Activated T-helper 2 cell treated with anti-CD3 and anti-CD28 coated beads, Interferon-gamma antibody, Interleukin-2, Interleukin-4, amounts not matched to agents 10 μg/mL and 5 μg/mL and 100 μg/mL, durations not matched to agents 14 hours and 24 hours and 36 hours (primary cell): ENCODE measurements at regions of chr14 and their contacts with region 1.

Region 1: GRCh38 chr14:105682940-105683570 is 156.7 kb downstream of the TMEM121 start:
- DNase-seq: no peak
- H3K4me3 Mint-ChIP-seq: no peak overlapping the region
- H3K27ac Mint-ChIP-seq: no peak overlapping the region
- H3K4me1 Mint-ChIP-seq: no peaks in the 10 kb centered on the region
- H3K27me3 Mint-ChIP-seq: no peaks in the 10 kb centered on the region

Region 2: GRCh38 chr14:105527661-105528581 is 155.1 kb before region 1 on chr14:
- intact Hi-C with region 1: no loop called
- DNase-seq: peak; percentile 75
- H3K4me3 Mint-ChIP-seq: peak overlapping the region; percentile 71
- H3K27ac Mint-ChIP-seq: no peak overlapping the region
- H3K4me1 Mint-ChIP-seq: peaks cover 2% of the 10 kb centered on the region
- H3K27me3 Mint-ChIP-seq: peaks cover 25% of the 10 kb centered on the region

Region 3: GRCh38 chr14:105627711-105628110 is 55.3 kb before region 1 on chr14:
- intact Hi-C with region 1: no loop called
- DNase-seq: no peak
- H3K4me3 Mint-ChIP-seq: no peak overlapping the region
- H3K27ac Mint-ChIP-seq: no peak overlapping the region
- H3K4me1 Mint-ChIP-seq: no peaks in the 10 kb centered on the region
- H3K27me3 Mint-ChIP-seq: peaks cover 1% of the 10 kb centered on the region

Region 4: DNA sequence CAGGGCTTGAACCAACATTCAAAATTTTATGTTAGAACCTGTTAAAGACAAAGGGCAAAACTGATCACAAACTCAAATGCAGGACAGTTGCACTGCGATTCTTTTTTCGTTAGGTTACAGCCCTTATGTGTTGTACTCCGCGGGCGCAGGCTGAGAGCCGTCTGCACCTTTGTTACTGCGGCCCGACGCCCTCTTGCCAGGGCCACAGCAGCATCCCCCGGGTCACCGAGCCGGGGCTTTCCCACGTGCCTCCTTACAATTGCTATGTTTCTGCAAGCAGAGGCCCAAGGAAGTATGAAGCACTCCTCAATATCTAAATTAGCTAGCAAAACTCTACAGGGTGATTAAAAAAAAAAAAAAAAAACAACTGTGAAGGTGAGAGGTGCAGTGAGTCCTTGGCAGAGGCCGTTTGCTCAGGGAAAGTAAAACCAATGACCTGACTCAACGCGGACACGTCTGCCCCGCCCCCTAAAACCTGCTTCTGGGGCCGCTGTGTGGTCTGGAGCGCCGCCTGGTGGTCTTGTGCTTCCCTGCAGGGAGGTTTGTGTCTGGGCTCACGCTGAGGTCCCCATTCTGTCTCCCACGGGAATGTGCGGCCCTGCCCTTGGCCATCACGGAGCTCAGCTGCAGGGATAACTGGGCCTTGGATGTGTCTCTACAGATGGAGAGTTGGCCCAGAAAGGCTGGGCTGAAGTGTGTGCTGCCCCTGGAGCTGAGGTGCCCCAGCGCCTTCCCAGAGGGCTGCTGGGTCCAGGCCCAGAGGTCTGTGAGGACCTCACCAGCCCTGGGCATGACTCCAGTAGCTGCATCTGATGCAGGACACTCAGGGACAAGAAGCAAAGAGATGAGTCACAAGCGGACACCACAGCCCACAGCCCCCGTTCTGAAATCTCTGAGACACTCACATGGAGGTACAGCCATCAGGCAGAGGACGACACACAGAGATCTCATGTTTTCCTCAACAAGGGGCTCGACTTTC is 261.9 kb after region 1 on chr14:
- intact Hi-C with region 1: loop called (anchors 5 kb)
- DNase-seq: peak; percentile 69
- H3K4me3 Mint-ChIP-seq: no peak overlapping the region
- H3K27ac Mint-ChIP-seq: no peak overlapping the region
- H3K4me1 Mint-ChIP-seq: peaks cover 3% of the 10 kb centered on the region
- H3K27me3 Mint-ChIP-seq: no peaks in the 10 kb centered on the region